Mammary epithelial cell (primary cell): ENCODE measurements at regions of chr12 and their contacts with region 1.

Region 1: DNA sequence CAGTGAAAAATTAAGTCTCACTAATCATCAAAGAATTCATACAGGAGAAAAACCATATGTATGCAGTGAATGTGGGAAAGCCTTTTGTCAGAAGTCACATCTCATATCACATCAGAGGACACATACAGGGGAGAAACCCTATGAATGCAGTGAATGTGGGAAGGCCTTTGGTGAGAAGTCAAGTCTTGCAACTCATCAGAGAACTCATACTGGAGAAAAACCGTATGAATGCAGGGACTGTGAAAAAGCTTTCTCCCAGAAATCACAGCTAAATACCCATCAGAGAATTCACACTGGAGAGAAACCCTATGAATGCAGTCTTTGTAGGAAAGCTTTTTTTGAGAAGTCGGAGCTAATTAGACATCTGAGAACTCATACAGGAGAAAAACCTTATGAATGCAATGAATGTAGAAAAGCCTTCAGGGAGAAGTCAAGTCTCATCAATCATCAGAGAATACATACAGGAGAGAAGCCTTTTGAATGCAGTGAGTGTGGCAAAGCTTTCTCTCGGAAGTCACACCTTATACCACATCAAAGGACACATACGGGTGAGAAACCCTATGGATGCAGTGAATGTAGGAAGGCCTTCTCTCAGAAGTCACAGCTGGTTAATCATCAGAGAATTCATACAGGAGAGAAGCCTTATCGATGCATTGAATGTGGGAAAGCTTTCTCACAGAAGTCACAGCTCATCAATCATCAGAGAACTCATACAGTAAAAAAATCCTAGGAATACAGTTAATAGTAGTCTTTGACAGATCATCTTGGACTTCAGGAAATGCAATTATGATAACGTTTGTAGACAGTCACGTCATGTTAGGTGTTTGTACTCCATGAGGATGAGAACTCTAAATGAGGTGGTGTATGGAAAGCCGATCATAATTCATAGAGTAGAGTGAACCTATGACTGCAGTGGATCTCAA is 21.2 kb downstream of the ZNF84 start:
- DNase-seq: peak; percentile 6
- H3K4me3 ChIP-seq: no peak overlapping the region
- H3K27ac ChIP-seq: no peak overlapping the region
- H3K4me1 ChIP-seq: no peaks in the 10 kb centered on the region
- H3K27me3 ChIP-seq: no peaks in the 10 kb centered on the region
- CTCF ChIP-seq: no peak

Region 2: DNA sequence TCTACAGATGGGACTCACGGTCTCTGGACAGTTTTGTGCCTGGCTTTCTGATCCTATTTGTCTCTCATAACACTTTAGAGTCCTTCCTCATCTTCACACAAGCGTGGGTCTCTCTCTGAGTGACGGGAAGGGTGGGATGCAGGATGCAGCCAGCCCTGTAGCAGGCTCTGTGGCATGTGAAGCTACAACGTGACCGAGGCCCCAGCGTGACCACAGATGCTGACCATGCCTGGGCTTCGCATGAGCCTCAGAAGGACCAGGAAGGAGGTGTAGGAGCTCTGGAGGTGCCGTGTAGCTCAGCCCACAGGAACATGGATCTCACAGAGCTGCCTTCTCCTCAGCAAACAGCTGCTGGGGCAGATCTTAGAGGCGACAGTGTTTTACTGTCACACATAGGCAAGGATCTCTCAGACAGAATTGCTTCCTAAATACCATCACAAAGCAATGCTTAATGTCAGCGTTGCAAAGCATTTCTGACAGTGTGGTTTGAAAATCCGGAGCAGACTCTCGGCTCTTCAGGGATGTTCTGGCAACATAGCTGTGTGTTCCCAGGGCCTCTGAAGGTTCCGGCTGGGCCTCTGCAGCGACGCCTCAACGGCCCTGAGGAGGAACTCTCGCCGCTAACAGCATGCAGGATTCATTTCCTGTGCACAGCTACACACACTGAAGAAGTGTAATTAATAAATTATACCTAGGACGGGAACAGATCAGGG is 318.7 kb before region 1 on chr12:
- CTCF ChIA-PET with region 1: no interaction called
- dilution Hi-C with region 1: no loop called
- in situ Hi-C with region 1: no loop called
- intact Hi-C with region 1: no loop called
- DNase-seq: no peak
- H3K4me3 ChIP-seq: no peak overlapping the region
- H3K27ac ChIP-seq: no peak overlapping the region
- H3K4me1 ChIP-seq: no peaks in the 10 kb centered on the region
- H3K27me3 ChIP-seq: no peaks in the 10 kb centered on the region
- CTCF ChIP-seq: no peak

Region 3: GRCh38 chr12:132921685-132922084 is 136.8 kb before region 1 on chr12:
- CTCF ChIA-PET with region 1: no interaction called
- dilution Hi-C with region 1: loop called (anchors 10 kb)
- in situ Hi-C with region 1: no loop called
- intact Hi-C with region 1: no loop called
- DNase-seq: no peak
- H3K4me3 ChIP-seq: no peak overlapping the region
- H3K27ac ChIP-seq: no peak overlapping the region
- H3K4me1 ChIP-seq: no peaks in the 10 kb centered on the region
- H3K27me3 ChIP-seq: no peaks in the 10 kb centered on the region
- CTCF ChIP-seq: peak; percentile 8 to 9

Region 4: DNA sequence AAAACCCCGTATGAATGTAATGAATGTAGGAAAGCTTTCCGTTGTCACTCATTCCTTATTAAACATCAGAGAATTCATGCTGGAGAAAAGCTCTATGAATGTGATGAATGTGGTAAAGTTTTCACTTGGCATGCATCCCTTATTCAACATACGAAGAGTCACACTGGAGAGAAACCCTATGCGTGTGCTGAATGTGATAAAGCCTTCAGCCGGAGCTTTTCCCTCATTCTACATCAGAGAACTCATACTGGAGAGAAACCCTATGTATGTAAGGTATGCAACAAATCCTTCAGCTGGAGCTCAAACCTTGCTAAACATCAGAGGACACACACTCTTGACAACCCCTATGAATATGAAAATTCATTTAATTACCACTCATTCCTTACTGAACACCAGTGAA is 47.8 kb after region 1 on chr12:
- CTCF ChIA-PET with region 1: no interaction called
- dilution Hi-C with region 1: loop called (anchors 5 kb)
- in situ Hi-C with region 1: no loop called
- intact Hi-C with region 1: no loop called
- DNase-seq: no peak
- H3K4me3 ChIP-seq: no peak overlapping the region
- H3K27ac ChIP-seq: no peak overlapping the region
- H3K4me1 ChIP-seq: no peaks in the 10 kb centered on the region
- H3K27me3 ChIP-seq: no peaks in the 10 kb centered on the region
- CTCF ChIP-seq: no peak

Region 5: DNA sequence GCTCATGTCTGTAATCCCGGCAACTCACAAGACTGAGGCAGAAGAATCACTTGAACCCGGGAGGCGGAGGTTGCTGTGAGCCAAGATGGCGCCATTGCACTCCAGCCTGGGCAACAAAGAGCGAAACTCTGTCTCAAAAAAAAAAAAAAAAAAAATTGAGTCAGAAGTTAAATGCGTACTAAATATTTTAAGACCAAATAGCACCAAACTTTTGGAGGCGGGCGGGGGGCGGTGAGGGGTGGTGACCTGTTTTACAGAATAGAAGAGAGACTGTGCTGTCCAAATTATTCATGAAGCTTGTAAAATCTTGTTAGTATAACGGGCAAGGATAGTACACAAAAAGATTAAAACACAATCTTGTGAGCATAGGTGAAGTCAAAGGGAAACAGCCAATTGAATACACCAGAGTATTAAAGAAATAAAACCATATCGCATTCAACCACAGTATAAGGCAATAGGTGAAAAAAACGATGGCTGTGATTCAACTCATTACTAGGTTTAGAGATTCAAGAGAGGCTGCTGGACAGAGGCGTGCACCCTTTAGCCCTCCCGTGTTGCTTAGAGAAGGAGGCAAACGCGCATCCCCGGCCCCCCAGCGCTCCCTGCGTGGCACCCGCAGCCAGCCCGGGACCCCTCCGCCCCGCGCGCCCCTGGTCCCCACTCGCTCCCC is 71.0 kb after region 1 on chr12:
- CTCF ChIA-PET with region 1: no interaction called
- dilution Hi-C with region 1: no loop called
- in situ Hi-C with region 1: no loop called
- intact Hi-C with region 1: no loop called
- DNase-seq: no peak
- H3K4me3 ChIP-seq: peak overlapping the region; percentile 63 to 91 (median 84)
- H3K27ac ChIP-seq: peak overlapping the region; percentile 31
- H3K4me1 ChIP-seq: no peaks in the 10 kb centered on the region
- H3K27me3 ChIP-seq: no peaks in the 10 kb centered on the region
- CTCF ChIP-seq: no peak